A673 (cell line): ENCODE measurements at regions of chr14 and their contacts with region 1.

Region 1: GRCh38 chr14:75088574-75089373 is 19.3 kb downstream of the ZC2HC1C start:
- DNase-seq: peak; percentile 82
- H3K4me3 ChIP-seq: no peak overlapping the region
- H3K27ac ChIP-seq: no peak overlapping the region
- H3K4me1 ChIP-seq: no peaks in the 10 kb centered on the region
- H3K27me3 ChIP-seq: no peaks in the 10 kb centered on the region
- CTCF ChIP-seq: peak; percentile 86

Region 2: GRCh38 chr14:73491256-73492042 is 1597.3 kb before region 1 on chr14:
- CTCF ChIA-PET with region 1: no interaction called
- POLR2A ChIA-PET with region 1: no interaction called
- intact Hi-C with region 1: no loop called
- DNase-seq: peak; percentile 67
- H3K4me3 ChIP-seq: peak overlapping the region; percentile 87
- H3K27ac ChIP-seq: peak overlapping the region; percentile 89
- H3K4me1 ChIP-seq: peaks cover 13% of the 10 kb centered on the region
- H3K27me3 ChIP-seq: no peaks in the 10 kb centered on the region
- CTCF ChIP-seq: no peak

Region 3: GRCh38 chr14:74459289-74459946 is 629.4 kb before region 1 on chr14:
- CTCF ChIA-PET with region 1: no interaction called
- POLR2A ChIA-PET with region 1: no interaction called
- intact Hi-C with region 1: no loop called
- DNase-seq: peak; percentile 36
- H3K4me3 ChIP-seq: no peak overlapping the region
- H3K27ac ChIP-seq: no peak overlapping the region
- H3K4me1 ChIP-seq: no peaks in the 10 kb centered on the region
- H3K27me3 ChIP-seq: no peaks in the 10 kb centered on the region
- CTCF ChIP-seq: peak; percentile 61

Region 4: DNA sequence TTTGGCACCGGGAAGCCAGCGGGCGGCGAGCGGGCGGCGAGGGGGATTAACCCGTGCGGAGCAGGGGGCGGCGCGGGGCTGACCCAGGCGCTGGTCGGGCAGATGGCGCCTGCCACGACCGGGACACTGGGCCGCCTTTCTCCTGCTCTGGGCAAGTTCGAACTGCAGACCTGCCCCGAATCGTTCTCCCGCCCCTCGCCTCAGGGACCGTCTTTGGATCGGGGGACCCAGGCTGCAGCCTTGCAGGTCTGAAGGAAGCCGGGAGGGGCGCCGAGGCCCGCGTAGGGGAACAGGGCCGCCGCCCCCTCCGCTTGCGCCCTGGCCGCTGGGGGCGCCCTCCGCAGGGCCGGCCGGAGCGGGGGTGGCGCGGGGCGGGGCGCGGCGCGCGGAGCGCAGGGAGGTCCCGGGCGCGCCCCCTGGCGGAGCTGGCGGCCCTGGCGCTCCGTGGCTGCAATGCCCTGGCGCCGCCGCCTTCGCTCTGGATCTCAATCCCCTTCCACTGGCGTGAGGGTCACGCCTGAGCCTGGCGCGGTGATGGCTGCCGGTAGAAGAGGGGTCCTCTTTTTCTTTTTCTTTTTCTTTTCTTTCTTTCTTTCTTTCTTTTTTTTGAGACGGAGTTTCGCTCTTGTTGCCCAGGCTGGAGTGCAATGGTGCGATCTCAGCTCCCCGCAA is 476.3 kb before region 1 on chr14:
- CTCF ChIA-PET with region 1: interaction called, 4 read pairs
- POLR2A ChIA-PET with region 1: interaction called, 4 read pairs
- intact Hi-C with region 1: loop called (anchors 10 kb)
- DNase-seq: peak; percentile 84
- H3K4me3 ChIP-seq: peak overlapping the region; percentile 46
- H3K27ac ChIP-seq: no peak overlapping the region
- H3K4me1 ChIP-seq: peaks cover 17% of the 10 kb centered on the region
- H3K27me3 ChIP-seq: peaks cover 27% of the 10 kb centered on the region
- CTCF ChIP-seq: peak; percentile 44

Region 5: GRCh38 chr14:74860906-74861733 is 227.7 kb before region 1 on chr14:
- CTCF ChIA-PET with region 1: interaction called, 13 read pairs
- POLR2A ChIA-PET with region 1: no interaction called
- intact Hi-C with region 1: loop called (anchors 5 kb)
- DNase-seq: peak; percentile 90
- H3K4me3 ChIP-seq: no peak overlapping the region
- H3K27ac ChIP-seq: no peak overlapping the region
- H3K4me1 ChIP-seq: peaks cover 4% of the 10 kb centered on the region
- H3K27me3 ChIP-seq: no peaks in the 10 kb centered on the region
- CTCF ChIP-seq: peak; percentile 89

Region 6: GRCh38 chr14:74881431-74882361 is 207.1 kb before region 1 on chr14 and contains the start of gene DLST:
- CTCF ChIA-PET with region 1: interaction called, 11 read pairs
- POLR2A ChIA-PET with region 1: no interaction called
- intact Hi-C with region 1: no loop called
- DNase-seq: peak; percentile 94
- H3K4me3 ChIP-seq: peak within 1 kb of the TSS; percentile 98
- H3K27ac ChIP-seq: peak within 1 kb of the TSS; percentile 96
- H3K4me1 ChIP-seq: peaks cover 12% of the 10 kb centered on the region
- H3K27me3 ChIP-seq: no peaks in the 10 kb centered on the region
- CTCF ChIP-seq: no peak
- total RNA-seq, gene DLST: 139 and 145 TPM in 2 replicates

Region 7: GRCh38 chr14:74913986-74914573 is 174.7 kb before region 1 on chr14:
- CTCF ChIA-PET with region 1: interaction called, 8 read pairs
- POLR2A ChIA-PET with region 1: no interaction called
- intact Hi-C with region 1: loop called (anchors 1 kb)
- DNase-seq: peak; percentile 80
- H3K4me3 ChIP-seq: no peak overlapping the region
- H3K27ac ChIP-seq: no peak overlapping the region
- H3K4me1 ChIP-seq: no peaks in the 10 kb centered on the region
- H3K27me3 ChIP-seq: no peaks in the 10 kb centered on the region
- CTCF ChIP-seq: peak; percentile 75

Region 8: DNA sequence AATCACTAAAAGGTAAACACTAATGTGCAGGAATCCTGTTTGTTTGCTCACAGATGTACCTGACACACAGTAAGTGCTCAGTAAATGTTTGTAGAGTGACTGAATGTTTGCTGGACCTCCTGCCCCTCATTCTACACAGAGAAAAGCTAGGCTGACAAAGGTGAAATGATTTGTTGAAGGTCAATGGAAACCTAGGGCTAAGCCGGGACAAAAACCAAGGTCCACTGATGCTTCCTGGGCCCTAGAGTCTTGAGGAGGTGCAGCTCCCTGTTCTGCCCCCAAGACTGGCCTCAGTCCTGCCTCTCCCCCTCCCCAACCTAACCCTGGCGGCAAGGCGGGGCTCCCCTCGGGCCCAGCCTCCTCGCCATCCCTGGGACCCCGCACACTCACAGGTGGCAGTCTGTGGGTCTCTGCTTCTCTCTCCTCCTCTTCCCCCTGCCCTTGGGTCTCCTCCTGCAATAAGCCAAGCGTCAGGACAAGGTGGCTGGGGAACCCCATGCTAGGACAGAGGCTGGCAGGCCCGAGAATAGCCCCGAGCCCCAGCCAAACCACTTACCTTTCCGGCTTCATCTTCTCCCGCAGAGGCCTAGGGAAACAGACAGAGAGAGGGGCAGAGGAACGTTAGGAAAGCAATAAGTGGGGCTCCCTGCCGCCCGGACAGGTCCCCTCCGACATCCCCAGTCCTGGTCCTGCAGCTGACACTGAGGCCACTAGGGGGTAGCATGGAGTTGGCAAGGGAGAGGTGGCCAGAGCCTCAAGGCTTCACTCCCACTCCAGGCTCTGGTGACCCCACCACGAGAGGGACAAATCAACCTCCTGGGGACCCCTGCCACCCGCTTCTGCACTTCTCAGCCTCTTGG is 142.7 kb before region 1 on chr14:
- CTCF ChIA-PET with region 1: interaction called, 10 read pairs
- POLR2A ChIA-PET with region 1: no interaction called
- intact Hi-C with region 1: loop called (anchors 1 kb)
- DNase-seq: peak; percentile 83
- H3K4me3 ChIP-seq: no peak overlapping the region
- H3K27ac ChIP-seq: no peak overlapping the region
- H3K4me1 ChIP-seq: peaks cover 12% of the 10 kb centered on the region
- H3K27me3 ChIP-seq: no peaks in the 10 kb centered on the region
- CTCF ChIP-seq: peak; percentile 97